ENCODE measurements at regions of chr21 and their contacts with region 1.

Region 1: DNA sequence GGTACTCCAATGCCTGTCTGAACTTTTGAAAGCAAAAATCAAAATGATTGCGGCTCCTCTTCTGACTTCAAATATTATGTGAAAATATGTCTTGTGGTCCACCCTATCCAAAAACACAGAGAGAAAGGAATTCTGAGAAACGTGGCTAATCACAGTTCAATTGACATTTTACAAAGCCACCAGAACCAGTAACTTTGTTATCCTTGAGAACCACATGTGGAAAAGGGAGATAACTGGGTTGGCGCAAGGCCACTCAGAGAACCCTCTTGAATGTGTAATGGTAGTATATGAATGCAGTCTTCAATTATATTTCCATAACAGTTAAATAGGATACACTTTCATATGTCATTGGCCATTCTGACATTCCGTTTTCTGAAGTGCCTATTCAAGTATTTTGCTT is 1030.0 kb upstream of the TMPRSS15 start:
- DNase-seq: no peak
- ATAC-seq: no peak
- H3K4me3 ChIP-seq: no peak overlapping the region
- H3K4me3 Mint-ChIP-seq: no peak overlapping the region
- H3K27ac ChIP-seq: no peak overlapping the region
- H3K27ac Mint-ChIP-seq: no peak overlapping the region
- H3K4me1 ChIP-seq: no peaks in the 10 kb centered on the region
- H3K4me1 Mint-ChIP-seq: no peaks in the 10 kb centered on the region
- H3K27me3 ChIP-seq: no peaks in the 10 kb centered on the region
- H3K27me3 Mint-ChIP-seq: no peaks in the 10 kb centered on the region

Region 2: GRCh38 chr21:20822666-20823065 is 1389.0 kb after region 1 on chr21:
- CTCF ChIA-PET with region 1: no interaction called
- POLR2A ChIA-PET with region 1: no interaction called
- intact Hi-C with region 1: loop called in 1 of 2 experiments (anchors 5 kb)
- DNase-seq: no peak
- ATAC-seq: no peak
- H3K4me3 ChIP-seq: no peak overlapping the region
- H3K4me3 Mint-ChIP-seq: no peak overlapping the region
- H3K27ac ChIP-seq: no peak overlapping the region
- H3K27ac Mint-ChIP-seq: no peak overlapping the region
- H3K4me1 ChIP-seq: no peaks in the 10 kb centered on the region
- H3K4me1 Mint-ChIP-seq: no peaks in the 10 kb centered on the region
- H3K27me3 ChIP-seq: no peaks in the 10 kb centered on the region
- H3K27me3 Mint-ChIP-seq: no peaks in the 10 kb centered on the region